Right ventricle myocardium inferior (tissue), 1 donor: ENCODE measurements at regions of chr3 and their contacts with region 1.

Region 1: DNA sequence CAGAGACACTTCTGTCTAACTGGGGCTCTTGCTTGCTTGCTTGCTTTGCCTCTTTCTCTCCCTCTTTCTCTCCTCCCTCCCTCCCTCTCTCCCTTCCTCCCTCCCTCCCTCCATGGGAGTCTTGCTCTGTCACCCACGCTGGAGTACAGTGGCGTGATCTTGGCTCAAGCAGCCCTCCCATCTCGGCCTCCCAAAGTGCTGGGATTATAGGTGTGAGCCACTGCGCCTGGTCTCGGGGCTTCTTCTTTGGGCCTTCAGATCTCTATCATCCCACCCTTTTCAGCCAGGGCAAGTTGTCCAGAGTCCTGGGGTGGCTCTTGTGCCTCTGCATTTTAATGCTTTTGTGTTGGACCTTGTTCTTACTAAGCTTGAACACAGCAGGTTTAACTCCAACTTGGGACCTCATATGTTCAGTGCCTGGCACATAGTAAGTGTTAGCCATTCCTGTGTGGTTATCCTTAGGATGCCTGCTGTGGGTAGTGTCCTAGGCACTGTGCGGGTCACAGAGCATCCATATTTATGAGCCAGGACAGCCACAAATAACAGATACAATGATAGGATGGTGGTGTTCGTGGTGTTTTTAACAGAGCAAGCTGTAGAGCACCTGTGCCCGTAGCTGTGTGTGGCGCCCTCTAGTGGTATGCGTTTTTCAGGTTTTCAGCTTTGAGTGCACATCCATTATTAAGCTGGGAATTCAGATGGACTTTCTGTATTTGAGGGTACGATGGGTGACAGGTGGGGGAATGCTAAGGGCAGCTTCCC is 75.1 kb downstream of the CCK start:
- DNase-seq: no peak
- ATAC-seq: peak; percentile 42

Region 2: GRCh38 chr3:41893977-41894376 is 296.9 kb before region 1 on chr3:
- intact Hi-C with region 1: loop called (anchors 2 kb)
- DNase-seq: no peak
- ATAC-seq: no peak

Region 3: GRCh38 chr3:41961750-41962679 is 228.9 kb before region 1 on chr3 and contains the start of gene ULK4:
- intact Hi-C with region 1: loop called (anchors 1 kb)
- DNase-seq: peak; percentile 98
- ATAC-seq: peak; percentile 98
- total RNA-seq, gene ULK4: 4.6 TPM

Region 4: DNA sequence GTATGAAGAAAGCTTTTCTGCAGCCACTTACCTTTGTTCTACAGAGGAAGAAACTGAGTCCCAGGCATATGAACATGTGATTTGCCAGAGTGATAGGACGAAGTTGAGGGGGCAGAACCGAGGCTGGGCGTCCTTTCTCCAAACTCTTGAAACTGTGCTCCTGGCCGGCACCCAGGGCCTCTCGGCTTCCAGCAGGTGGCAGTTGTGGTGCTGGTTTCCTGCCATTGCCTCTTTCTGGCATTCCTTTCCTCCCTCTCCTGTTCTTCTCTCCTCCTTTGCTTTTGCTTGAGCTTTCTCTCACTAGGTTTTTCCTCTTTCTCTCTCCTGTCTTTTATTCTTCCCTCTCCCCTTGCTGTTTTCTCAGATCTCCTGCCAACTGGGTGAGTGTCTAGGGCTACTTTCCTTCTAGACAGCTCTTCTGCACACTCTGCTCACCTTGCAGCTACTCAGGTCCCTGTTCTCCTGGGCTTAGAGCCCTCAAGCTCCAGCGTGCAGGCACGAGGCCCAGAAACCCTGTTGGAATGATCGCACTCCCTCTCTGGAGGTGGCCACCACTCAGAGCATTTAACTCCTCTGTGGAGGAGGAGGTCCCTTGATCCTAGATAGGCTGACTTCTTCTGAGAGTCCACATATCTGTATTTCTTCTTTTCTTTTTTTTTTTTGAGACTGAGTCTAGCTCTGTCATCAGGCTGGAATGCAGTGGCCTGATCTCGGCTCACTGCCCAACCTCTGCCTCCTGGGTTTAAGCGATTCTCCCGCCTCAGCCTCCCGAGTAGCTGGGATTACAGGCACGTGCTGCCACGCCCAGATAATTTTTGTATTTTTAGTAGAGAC is 73.5 kb before region 1 on chr3:
- intact Hi-C with region 1: loop called (anchors 2 kb)
- DNase-seq: peak; percentile 67
- ATAC-seq: peak; percentile 59